ENCODE measurements at regions of chr11 and their contacts with region 1.

Region 1: GRCh38 chr11:10808553-10809372 is at the start of gene EIF4G2:
- DNase-seq: peak; percentile 96 to 99 (median 98)
- H3K4me3 ChIP-seq: peak within 1 kb of the TSS; percentile 90
- H3K4me3 Mint-ChIP-seq: peak within 1 kb of the TSS; percentile 95 to 100 (median 98)
- H3K27ac ChIP-seq: peak within 1 kb of the TSS; percentile 93
- H3K27ac Mint-ChIP-seq: peak within 1 kb of the TSS; percentile 93 to 100 (median 98)
- H3K4me1 ChIP-seq: peaks cover 44% of the 10 kb centered on the region
- H3K4me1 Mint-ChIP-seq: peaks cover 42 to 51% (median 50%) of the 10 kb centered on the region in 3 donors
- H3K27me3 ChIP-seq: no peaks in the 10 kb centered on the region
- H3K27me3 Mint-ChIP-seq: peaks cover 0 to 2% of the 10 kb centered on the region in 2 donors
- total RNA-seq, gene EIF4G2: 1,516 to 1,609 TPM

Region 2: DNA sequence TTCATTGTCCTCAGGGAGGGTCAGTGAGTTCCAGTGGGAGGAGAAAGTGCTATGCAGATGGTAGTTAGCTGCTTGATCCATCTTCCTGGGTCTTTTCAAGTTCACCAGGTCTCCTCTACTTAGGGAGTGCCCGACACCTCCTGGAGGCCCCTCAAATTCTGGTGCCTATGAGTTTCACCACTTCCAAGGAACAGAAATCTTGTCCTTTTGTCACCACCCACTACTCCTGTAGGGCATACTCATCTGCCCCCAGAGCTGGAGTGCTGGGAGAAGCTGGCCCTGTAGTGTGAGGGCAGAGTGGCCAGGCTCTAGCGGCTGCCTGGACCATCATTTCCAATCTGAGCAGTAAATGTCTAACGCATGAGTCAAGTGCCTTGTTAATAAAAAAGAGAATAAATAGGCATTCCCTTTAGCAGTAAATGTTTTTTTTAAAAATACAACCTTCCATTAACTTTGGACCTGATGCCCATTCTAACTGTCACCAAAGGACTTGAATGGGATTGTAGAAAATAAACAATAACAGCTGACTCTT is 127.7 kb before region 1 on chr11:
- CTCF ChIA-PET with region 1: no interaction called
- POLR2A ChIA-PET with region 1: no interaction called
- DNase-seq: no peak
- H3K4me3 ChIP-seq: no peak overlapping the region
- H3K4me3 Mint-ChIP-seq: no peak overlapping the region
- H3K27ac ChIP-seq: no peak overlapping the region
- H3K27ac Mint-ChIP-seq: no peak overlapping the region
- H3K4me1 ChIP-seq: no peaks in the 10 kb centered on the region
- H3K4me1 Mint-ChIP-seq: no peaks in the 10 kb centered on the region
- H3K27me3 ChIP-seq: no peaks in the 10 kb centered on the region
- H3K27me3 Mint-ChIP-seq: peaks cover 22 to 36% of the 10 kb centered on the region in 2 donors

Region 3: GRCh38 chr11:10750838-10751580 is 57.8 kb before region 1 on chr11 and contains the start of gene CTR9:
- CTCF ChIA-PET with region 1: interaction called, 8 read pairs
- POLR2A ChIA-PET with region 1: interaction called, 20 read pairs
- DNase-seq: peak; percentile 87 to 92 (median 89)
- H3K4me3 ChIP-seq: peak within 1 kb of the TSS; percentile 88
- H3K4me3 Mint-ChIP-seq: peak within 1 kb of the TSS; percentile 94 to 100 (median 98)
- H3K27ac ChIP-seq: peak within 1 kb of the TSS; percentile 80
- H3K27ac Mint-ChIP-seq: peak within 1 kb of the TSS; percentile 84 to 98 (median 94)
- H3K4me1 ChIP-seq: peaks cover 12% of the 10 kb centered on the region
- H3K4me1 Mint-ChIP-seq: peaks cover 22 to 52% (median 29%) of the 10 kb centered on the region in 3 donors
- H3K27me3 ChIP-seq: no peaks in the 10 kb centered on the region
- H3K27me3 Mint-ChIP-seq: no peaks in the 10 kb centered on the region
- total RNA-seq, gene CTR9: 49.9 to 60.8 TPM

Region 4: DNA sequence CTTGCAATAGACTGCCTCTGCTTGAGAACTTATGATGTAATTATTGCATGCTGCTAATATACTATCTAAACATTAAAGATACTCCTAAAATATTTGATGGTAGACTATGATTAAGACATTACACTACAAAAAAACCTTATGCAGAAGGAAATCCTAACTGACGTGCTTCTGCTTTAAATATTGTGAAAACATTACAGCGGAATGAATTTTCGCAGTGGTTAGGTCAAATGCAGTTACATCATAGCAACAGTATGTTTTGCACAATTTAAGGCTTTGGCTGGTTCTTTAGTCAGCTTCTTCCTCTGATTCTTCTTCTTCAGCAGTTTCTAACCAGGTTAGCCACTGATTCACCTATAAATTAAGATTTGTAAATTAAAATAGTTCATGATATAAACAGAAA is 11.2 kb before region 1 on chr11:
- CTCF ChIA-PET with region 1: interaction called, 42 read pairs
- POLR2A ChIA-PET with region 1: interaction called, 49 read pairs
- DNase-seq: no peak
- H3K4me3 ChIP-seq: no peak overlapping the region
- H3K4me3 Mint-ChIP-seq: no peak overlapping the region
- H3K27ac ChIP-seq: no peak overlapping the region
- H3K27ac Mint-ChIP-seq: peak overlapping the region in 2 of 8 donors; percentile 26 to 65
- H3K4me1 ChIP-seq: peaks cover 68% of the 10 kb centered on the region
- H3K4me1 Mint-ChIP-seq: peaks cover 64 to 87% (median 81%) of the 10 kb centered on the region in 3 donors
- H3K27me3 ChIP-seq: no peaks in the 10 kb centered on the region
- H3K27me3 Mint-ChIP-seq: peaks cover 0 to 5% of the 10 kb centered on the region in 2 donors

Region 5: DNA sequence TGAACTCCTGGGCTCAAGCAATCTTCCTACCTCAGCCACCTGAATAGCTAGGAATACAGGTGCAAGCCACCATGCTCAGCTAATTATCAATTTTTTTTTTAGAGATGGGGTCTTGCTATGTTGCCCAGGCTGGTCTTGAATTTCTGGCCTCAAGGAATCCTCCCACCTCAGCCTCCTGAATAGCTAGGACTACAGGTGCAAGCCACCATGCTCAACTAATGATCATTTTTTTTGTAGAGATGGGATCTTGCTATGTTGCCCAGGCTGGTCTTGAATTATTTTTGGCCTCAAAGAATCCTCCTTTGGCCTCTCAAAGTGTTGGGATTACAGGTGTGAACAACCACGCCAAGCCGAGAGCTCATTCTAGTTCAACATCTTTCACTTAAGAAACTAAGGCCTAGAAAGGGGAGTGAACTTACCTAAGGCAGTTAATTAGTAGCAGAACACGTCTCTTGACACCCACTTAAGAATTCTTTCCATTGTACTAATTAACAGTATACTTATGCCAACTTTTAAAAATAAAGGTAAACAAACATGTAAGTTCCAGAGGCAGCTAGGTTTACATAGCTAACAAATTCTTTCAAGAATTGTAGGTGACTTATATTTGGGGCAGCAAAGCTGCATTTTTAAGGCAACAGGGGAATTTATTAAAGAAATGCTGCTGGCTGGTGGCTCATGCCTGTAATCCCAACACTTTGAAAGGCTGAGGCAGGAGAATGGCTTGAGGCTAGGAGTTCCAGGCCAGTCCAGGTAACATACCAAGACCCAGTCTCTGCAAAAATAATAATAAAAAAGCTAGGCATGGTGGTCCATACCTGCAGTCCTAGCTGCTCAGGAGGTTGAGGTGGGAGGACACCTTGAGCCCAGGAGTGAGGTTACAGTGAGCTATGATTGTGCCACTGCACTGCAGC is 39.5 kb after region 1 on chr11:
- CTCF ChIA-PET with region 1: interaction called, 6 read pairs
- POLR2A ChIA-PET with region 1: interaction called, 248 read pairs
- DNase-seq: no peak
- H3K4me3 ChIP-seq: no peak overlapping the region
- H3K4me3 Mint-ChIP-seq: no peak overlapping the region
- H3K27ac ChIP-seq: no peak overlapping the region
- H3K27ac Mint-ChIP-seq: peak overlapping the region in 3 of 8 donors; percentile 17 to 80 (median 63)
- H3K4me1 ChIP-seq: no peaks in the 10 kb centered on the region
- H3K4me1 Mint-ChIP-seq: peaks cover 17 to 29% (median 18%) of the 10 kb centered on the region in 3 donors
- H3K27me3 ChIP-seq: no peaks in the 10 kb centered on the region
- H3K27me3 Mint-ChIP-seq: no peaks in the 10 kb centered on the region

Region 6: GRCh38 chr11:10857709-10858438 is 49.1 kb after region 1 on chr11 and contains the start of gene ZBED5:
- CTCF ChIA-PET with region 1: interaction called, 32 read pairs
- POLR2A ChIA-PET with region 1: interaction called, 248 read pairs
- DNase-seq: peak; percentile 90 to 97 (median 96)
- H3K4me3 ChIP-seq: peak within 1 kb of the TSS; percentile 75
- H3K4me3 Mint-ChIP-seq: peak within 1 kb of the TSS; percentile 95 to 100 (median 99)
- H3K27ac ChIP-seq: peak within 1 kb of the TSS; percentile 89
- H3K27ac Mint-ChIP-seq: peak within 1 kb of the TSS; percentile 96 to 100 (median 99)
- H3K4me1 ChIP-seq: peaks cover 27% of the 10 kb centered on the region
- H3K4me1 Mint-ChIP-seq: peaks cover 31 to 58% (median 56%) of the 10 kb centered on the region in 3 donors
- H3K27me3 ChIP-seq: no peaks in the 10 kb centered on the region
- H3K27me3 Mint-ChIP-seq: no peaks in the 10 kb centered on the region
- total RNA-seq, gene ZBED5: 45.7 to 51.9 TPM

Region 7: DNA sequence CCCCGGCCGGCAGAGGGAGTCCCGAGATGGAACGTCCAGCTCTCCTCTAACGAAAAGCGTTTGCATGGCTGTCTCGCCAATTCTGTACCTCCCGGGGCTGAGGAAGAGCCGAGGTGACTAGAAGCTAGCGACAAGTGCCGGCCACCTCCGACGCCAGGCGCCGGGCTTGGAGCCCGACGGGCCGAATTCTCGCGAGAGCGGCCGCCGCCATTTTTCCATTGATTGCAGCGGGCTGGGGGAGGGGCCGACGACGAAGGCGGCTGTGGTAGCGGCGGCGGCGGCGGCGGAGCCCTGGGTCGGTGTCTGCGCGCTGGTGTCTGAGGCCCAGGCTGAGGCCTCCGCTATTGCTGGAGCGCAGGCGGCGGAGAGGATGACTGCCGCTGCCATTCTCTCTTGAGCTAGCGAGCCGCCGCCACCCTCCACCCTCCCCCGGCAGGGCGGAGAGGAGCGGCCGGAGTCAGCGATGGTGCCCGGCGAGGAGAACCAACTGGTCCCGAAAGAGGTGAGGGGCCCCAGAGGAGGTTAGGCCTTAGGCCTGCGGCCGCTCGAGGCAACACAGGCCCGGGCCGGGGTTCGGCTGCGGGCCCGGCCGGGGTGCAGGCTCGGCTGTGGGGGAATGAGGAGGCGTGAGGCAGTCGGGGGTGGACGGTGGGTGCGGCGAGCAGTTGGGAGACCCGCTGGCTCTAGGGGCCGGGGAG is 1033.1 kb after region 1 on chr11 and contains the start of gene USP47:
- CTCF ChIA-PET with region 1: no interaction called
- POLR2A ChIA-PET with region 1: interaction called, 15 read pairs
- DNase-seq: peak; percentile 93 to 96 (median 94)
- H3K4me3 ChIP-seq: peak within 1 kb of the TSS; percentile 52
- H3K4me3 Mint-ChIP-seq: no peak within 1 kb of the TSS
- H3K27ac ChIP-seq: peak within 1 kb of the TSS; percentile 92
- H3K27ac Mint-ChIP-seq: peak within 1 kb of the TSS in 1 of 8 donors; percentile 83
- H3K4me1 ChIP-seq: peaks cover 32% of the 10 kb centered on the region
- H3K4me1 Mint-ChIP-seq: peaks cover 3 to 5% (median 3%) of the 10 kb centered on the region in 3 donors
- H3K27me3 ChIP-seq: no peaks in the 10 kb centered on the region
- H3K27me3 Mint-ChIP-seq: peaks cover 15 to 18% of the 10 kb centered on the region in 2 donors
- total RNA-seq, gene USP47: 47.0 to 50.2 TPM

Measured in CD8-positive, alpha-beta memory T cell (primary cell).